ENCODE measurements at regions of chr1 and their contacts with region 1.

Region 1: DNA sequence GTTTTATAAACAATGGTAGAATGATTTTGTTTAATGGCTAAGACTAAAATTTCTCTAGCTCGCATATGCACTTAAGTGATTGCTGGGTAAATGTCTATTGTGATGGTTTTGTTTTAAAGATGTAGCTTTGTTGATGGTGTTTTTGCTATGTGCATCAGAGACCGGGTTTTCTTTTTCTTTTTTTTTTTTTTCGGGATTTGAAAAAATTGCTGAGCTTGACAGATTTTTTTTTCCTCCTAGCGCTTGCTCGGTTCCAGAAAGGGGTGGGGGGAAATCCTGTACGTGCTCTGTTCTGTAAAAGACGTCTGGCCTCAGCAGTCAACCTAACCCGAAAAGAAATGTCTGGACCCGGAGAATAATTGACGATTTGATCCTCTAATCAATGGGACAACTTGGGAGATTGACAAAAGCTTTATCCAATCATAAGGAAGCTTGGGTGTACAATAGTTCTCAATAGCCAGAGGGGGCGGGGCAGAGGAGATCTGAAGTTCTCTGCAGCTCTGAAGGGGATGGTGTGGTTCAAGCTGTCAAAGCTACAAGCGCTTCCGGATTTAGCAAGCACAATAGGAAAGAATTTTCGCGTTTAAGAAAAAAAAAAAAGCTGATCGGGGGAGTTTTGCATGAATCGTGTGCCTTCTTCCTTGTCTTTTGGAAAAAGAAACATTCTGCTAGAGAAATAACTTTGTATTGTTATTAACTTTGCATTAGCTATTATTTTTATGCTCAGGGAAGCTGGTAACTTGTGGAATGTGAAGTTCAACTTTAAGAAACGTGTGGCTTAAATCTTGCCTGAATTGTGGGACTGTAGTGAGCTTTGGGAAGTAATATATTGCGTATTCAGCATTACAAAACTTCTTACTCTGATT is 4.5 kb upstream of the NFIA start:
- DNase-seq: peak; percentile 95
- H3K4me3 ChIP-seq: peak overlapping the region; percentile 29 to 51
- H3K27ac ChIP-seq: peak overlapping the region; percentile 89 to 97
- H3K4me1 ChIP-seq: peaks cover 12% of the 10 kb centered on the region
- H3K27me3 ChIP-seq: no peaks in the 10 kb centered on the region
- CTCF ChIP-seq: peak in 1 of 4 experiments; percentile 20
- POLR2A ChIP-seq: peak; percentile 22

Region 2: DNA sequence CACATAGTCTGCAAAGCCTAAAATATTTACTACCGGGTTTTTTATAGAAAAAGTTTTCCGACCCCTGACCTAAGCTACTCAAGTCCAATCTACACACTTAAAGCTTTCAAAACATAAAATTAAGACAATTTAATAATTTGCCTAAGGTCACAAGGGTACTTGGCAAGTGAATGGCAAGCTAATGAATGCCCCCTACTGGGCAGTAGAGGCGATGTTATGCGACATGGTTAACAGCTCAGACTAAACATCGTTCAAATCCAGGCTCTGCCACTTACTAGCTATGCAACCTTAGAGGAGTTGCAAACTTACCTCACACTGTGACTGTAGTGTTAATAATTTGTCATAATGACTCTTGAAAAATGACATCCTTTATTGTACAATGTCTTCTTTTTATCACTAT is 312.7 kb before region 1 on chr1:
- intact Hi-C with region 1: no loop called
- DNase-seq: peak; percentile 7
- H3K4me3 ChIP-seq: no peak overlapping the region
- H3K27ac ChIP-seq: no peak overlapping the region
- H3K4me1 ChIP-seq: no peaks in the 10 kb centered on the region
- H3K27me3 ChIP-seq: no peaks in the 10 kb centered on the region
- CTCF ChIP-seq: peak in 3 of 4 experiments; percentile 35 to 52 (median 44)
- POLR2A ChIP-seq: no peak

Region 3: DNA sequence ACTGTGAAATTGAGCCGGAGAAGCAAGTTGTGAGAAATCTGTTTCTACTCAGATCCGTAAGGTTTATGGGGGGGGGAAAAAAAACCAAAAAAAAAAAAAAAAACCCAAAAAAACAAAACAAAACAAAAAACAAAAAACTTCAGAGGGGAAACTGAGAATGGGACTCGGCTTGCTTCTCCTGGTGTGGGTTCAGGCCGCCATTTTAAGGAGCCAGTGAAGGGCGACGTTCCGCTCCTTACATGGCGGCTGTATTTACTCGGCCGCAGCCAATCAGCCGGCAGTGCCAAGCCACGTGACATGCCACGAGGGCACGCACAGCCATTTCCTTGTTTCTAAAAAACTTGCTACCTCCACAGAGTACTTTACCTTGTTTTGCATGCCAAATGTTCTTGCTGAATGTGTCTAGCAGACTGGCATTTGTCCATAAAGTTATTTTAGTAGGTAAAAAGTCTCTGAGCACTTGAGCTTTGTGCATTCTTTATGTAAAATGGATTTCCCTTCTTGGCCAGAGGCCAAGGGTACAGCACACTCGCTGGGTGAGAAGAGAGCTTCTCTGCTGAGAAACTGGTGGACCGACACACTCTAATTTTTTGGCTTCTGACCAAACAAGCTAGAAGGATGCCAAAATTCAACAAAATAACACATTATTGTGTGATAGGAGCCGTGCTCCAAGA is 106.3 kb after region 1 on chr1:
- intact Hi-C with region 1: loop called (anchors 5 kb)
- DNase-seq: peak; percentile 95
- H3K4me3 ChIP-seq: peak overlapping the region; percentile 21 to 30
- H3K27ac ChIP-seq: peak overlapping the region; percentile 73 to 83
- H3K4me1 ChIP-seq: peaks cover 7% of the 10 kb centered on the region
- H3K27me3 ChIP-seq: no peaks in the 10 kb centered on the region
- CTCF ChIP-seq: no peak
- POLR2A ChIP-seq: no peak

Region 4: DNA sequence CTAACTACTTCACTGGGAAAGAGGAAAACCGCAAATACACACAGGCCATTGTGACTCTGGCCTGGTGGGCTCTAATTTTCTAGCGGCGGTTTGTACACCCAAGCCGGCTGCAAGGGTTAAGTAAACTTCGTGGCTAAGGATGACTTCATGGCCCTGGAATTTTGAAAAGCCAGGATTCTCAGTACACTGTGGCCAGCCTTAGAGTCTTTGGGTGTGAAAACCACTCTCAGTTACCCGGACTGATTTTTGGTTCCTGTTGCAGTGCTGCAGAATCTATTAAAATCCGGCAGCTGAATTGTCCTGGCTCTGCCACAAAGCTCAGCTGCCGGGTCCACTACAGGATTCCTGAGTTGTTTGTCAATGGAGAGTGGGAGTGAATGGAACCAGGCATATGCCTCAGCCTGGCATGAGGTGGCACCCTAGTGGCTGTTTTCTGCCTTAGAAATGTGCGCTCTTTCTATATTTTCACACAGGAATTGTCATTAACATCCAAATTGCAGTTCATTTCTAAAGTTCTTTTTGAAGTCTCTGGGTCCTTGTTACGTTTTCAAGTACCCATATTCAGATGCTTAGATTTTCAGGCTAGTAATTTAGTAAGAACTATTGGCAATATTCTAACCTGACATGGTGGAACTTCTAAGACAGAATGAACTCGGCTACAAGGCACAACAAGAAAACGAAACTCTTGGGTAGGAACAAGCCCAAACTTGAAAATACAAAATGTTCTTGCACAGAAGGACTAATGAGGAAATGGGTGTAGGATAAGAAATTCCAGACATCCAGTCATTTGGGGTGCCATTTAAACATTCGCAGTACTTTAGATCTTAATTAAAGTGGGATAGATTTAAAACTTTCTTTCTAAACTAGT is 260.3 kb after region 1 on chr1:
- intact Hi-C with region 1: loop called (anchors 2 kb)
- DNase-seq: peak; percentile 86
- H3K4me3 ChIP-seq: peak overlapping the region in 1 of 2 donors; percentile 13
- H3K27ac ChIP-seq: peak overlapping the region; percentile 55 to 68
- H3K4me1 ChIP-seq: no peaks in the 10 kb centered on the region
- H3K27me3 ChIP-seq: no peaks in the 10 kb centered on the region
- CTCF ChIP-seq: peak; percentile 55 to 83 (median 82)
- POLR2A ChIP-seq: no peak

Measured in prostate gland (tissue), 2 donors.